Activated CD4-positive, alpha-beta T cell treated with anti-CD3 and anti-CD28 coated beads, Interleukin-2, amount 10 ng/mL, durations not matched to agents 7 days and 5 days (primary cell): ENCODE measurements at regions of chr1 and their contacts with region 1.

Region 1: GRCh38 chr1:27556781-27557595 is 47.0 kb downstream of the AHDC1 start:
- DNase-seq: peak; percentile 79
- H3K4me3 Mint-ChIP-seq: peak overlapping the region; percentile 14
- H3K27ac Mint-ChIP-seq: peak overlapping the region; percentile 90
- H3K4me1 Mint-ChIP-seq: peaks cover 43% of the 10 kb centered on the region
- H3K27me3 Mint-ChIP-seq: no peaks in the 10 kb centered on the region

Region 2: GRCh38 chr1:27525296-27526272 is 31.4 kb before region 1 on chr1:
- CTCF ChIA-PET with region 1: interaction called, 22 read pairs
- POLR2A ChIA-PET with region 1: no interaction called
- DNase-seq: peak; percentile 73
- H3K4me3 Mint-ChIP-seq: peak overlapping the region; percentile 76
- H3K27ac Mint-ChIP-seq: peak overlapping the region; percentile 64
- H3K4me1 Mint-ChIP-seq: peaks cover 75% of the 10 kb centered on the region
- H3K27me3 Mint-ChIP-seq: no peaks in the 10 kb centered on the region

Region 3: DNA sequence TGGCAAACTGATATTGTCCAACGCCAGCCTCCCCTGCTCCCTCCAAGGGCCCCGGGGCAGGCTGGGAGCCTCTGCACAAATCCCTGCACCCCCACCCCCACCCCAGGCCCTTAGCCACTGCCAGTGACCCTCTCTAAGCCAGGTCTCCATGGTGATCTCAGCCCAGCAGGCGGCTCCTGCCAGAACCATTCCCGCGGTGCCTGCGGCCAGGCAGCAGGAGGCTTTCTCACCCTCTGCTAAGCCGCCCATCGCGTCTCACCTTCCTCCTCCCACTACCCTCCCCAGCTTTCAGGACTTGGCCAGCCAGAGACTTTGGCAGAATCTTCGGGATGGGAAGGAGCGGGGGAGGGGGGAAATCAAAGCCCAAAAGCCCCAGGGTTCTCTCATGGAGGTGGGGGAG is 20.2 kb before region 1 on chr1:
- CTCF ChIA-PET with region 1: interaction called, 19 read pairs
- POLR2A ChIA-PET with region 1: no interaction called
- DNase-seq: no peak
- H3K4me3 Mint-ChIP-seq: no peak overlapping the region
- H3K27ac Mint-ChIP-seq: no peak overlapping the region
- H3K4me1 Mint-ChIP-seq: peaks cover 20% of the 10 kb centered on the region
- H3K27me3 Mint-ChIP-seq: no peaks in the 10 kb centered on the region

Region 4: GRCh38 chr1:27568300-27569087 is 11.5 kb after region 1 on chr1:
- CTCF ChIA-PET with region 1: interaction called, 112 read pairs
- POLR2A ChIA-PET with region 1: interaction called, 3 read pairs
- DNase-seq: peak; percentile 94
- H3K4me3 Mint-ChIP-seq: peak overlapping the region; percentile 48
- H3K27ac Mint-ChIP-seq: peak overlapping the region; percentile 59
- H3K4me1 Mint-ChIP-seq: peaks cover 27% of the 10 kb centered on the region
- H3K27me3 Mint-ChIP-seq: peaks cover 4% of the 10 kb centered on the region

Region 5: DNA sequence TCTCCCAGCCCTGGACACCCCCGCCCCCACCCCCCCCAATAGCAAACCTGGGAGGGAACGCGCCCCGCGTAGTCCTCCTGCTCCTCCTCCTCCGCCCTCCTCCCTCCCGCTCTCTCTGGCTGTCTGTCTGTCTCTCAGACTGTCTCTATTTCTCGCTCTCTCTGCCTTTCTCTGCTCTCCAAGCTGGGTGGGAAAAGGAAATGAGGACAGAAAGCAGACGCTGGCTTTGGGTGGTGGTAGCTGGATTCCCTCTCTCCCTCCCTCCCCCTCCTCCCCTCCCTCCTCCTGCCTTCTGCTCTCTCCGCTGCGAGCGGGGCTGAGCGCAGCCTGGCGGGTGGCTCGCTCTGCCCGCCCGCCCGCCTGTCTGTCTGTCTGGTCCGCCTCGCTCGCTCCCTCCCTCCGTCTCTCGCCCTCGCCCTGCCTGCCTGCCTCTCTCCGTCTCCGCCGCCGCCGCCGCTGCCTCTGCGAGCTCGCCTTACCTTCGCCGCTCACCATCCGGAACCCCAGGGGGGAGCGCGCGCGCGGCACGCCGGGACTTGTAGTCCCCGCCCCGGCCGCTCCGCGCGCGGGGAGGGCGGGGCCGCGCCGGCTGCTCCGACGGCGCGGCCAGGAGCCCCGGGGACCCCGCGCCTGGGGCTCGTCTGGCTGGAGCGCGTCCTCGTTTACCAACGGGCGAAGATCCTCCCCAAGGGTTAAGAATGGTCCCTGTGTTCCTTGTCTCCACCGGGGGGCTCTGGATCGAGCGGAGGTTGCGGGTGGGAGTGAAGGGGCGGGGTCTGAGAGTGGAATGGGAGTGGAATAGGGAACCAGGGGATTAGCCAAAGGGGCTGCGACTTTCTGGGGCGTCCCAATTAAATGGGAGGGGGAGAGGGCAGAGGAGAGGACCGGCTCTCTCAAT is 46.9 kb after region 1 on chr1 and contains the start of gene AHDC1:
- CTCF ChIA-PET with region 1: interaction called, 21 read pairs
- POLR2A ChIA-PET with region 1: no interaction called
- DNase-seq: peak; percentile 94
- H3K4me3 Mint-ChIP-seq: peak within 1 kb of the TSS; percentile 91
- H3K27ac Mint-ChIP-seq: peak within 1 kb of the TSS; percentile 85
- H3K4me1 Mint-ChIP-seq: peaks cover 43% of the 10 kb centered on the region
- H3K27me3 Mint-ChIP-seq: peaks cover 5% of the 10 kb centered on the region
- total RNA-seq, gene AHDC1: 15.3 to 19.3 TPM

Region 6: GRCh38 chr1:27662707-27663393 is 105.9 kb after region 1 on chr1:
- CTCF ChIA-PET with region 1: interaction called, 24 read pairs
- POLR2A ChIA-PET with region 1: no interaction called
- DNase-seq: peak; percentile 93
- H3K4me3 Mint-ChIP-seq: peak overlapping the region; percentile 68
- H3K27ac Mint-ChIP-seq: peak overlapping the region; percentile 98
- H3K4me1 Mint-ChIP-seq: peaks cover 71% of the 10 kb centered on the region
- H3K27me3 Mint-ChIP-seq: no peaks in the 10 kb centered on the region